Natural killer cell (primary cell): ENCODE measurements at regions of chr11 and their contacts with region 1.

Region 1: DNA sequence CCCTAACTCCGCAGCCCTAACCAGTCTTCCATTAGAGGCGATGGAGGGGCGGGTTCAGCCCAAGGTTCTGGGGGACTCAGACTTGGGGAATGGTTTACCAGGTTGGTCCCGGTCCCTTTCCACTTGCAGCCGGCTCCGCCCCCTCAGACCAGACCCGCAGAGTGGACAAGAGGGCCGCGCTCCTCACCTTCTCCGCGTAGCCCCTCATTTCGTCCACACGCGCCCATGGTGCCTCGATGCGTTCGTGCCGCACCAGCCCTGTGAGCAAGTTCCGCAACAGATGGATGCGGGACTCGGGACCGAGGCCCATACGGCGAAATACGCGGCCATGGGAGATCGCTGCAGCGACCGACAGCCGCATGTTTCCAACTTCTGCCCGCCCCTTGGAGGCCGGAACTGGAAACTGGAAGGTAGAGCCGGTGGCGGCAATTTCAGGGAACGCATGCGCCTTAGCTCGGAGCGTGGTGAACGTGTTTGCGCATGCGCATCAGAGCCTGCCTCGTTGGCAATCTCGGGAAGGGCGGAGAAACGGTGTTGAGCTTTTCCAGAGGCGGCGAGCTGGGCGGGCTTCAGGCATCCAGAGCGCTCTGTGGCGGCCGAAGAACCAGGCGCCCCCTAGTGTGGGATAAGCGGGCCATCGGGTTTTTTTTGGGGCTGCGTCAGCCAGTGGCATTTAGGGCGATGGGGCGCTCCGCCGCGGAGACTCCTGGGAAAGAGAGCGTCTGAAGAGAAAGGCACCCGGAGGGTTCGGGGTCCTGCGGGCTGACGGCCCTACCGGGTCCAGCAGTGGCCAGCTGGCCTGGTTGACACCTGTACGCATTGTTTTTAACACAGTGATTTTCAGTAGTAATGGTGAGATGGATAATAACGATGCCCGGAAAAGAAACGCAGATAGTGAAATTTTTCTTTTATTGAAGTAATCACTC is at the start of gene MRPL17:
- DNase-seq: peak; percentile 94 to 100
- ATAC-seq: peak; percentile 86 to 95 (median 94)
- H3K4me3 ChIP-seq: peak within 1 kb of the TSS; percentile 92
- H3K4me3 Mint-ChIP-seq: peak within 1 kb of the TSS; percentile 99
- H3K27ac ChIP-seq: peak within 1 kb of the TSS; percentile 89
- H3K27ac Mint-ChIP-seq: peak within 1 kb of the TSS; percentile 99 to 100
- H3K4me1 ChIP-seq: peaks cover 12% of the 10 kb centered on the region
- H3K4me1 Mint-ChIP-seq: peaks cover 24 to 31% of the 10 kb centered on the region in 2 donors
- H3K27me3 ChIP-seq: no peaks in the 10 kb centered on the region
- H3K27me3 Mint-ChIP-seq: no peaks in the 10 kb centered on the region
- CTCF ChIP-seq: peak; percentile 55
- total RNA-seq, gene MRPL17: 9.0 to 11.8 (median 11.4) TPM

Region 2: GRCh38 chr11:6481012-6481923 is 201.9 kb before region 1 on chr11 and contains the starts of genes ARFIP2 and TIMM10B:
- intact Hi-C with region 1: loop called (anchors 2 kb)
- DNase-seq: peak; percentile 95 to 99
- ATAC-seq: peak; percentile 92 to 98 (median 96)
- H3K4me3 ChIP-seq: peak within 1 kb of the TSS; percentile 74
- H3K4me3 Mint-ChIP-seq: peak within 1 kb of the TSS; percentile 91
- H3K27ac ChIP-seq: peak within 1 kb of the TSS; percentile 95
- H3K27ac Mint-ChIP-seq: peak within 1 kb of the TSS; percentile 95 to 99
- H3K4me1 ChIP-seq: peaks cover 22% of the 10 kb centered on the region
- H3K4me1 Mint-ChIP-seq: peaks cover 32 to 37% of the 10 kb centered on the region in 2 donors
- H3K27me3 ChIP-seq: no peaks in the 10 kb centered on the region
- H3K27me3 Mint-ChIP-seq: no peaks in the 10 kb centered on the region
- CTCF ChIP-seq: no peak
- total RNA-seq, gene ARFIP2: 44.7 to 62.3 (median 51.4) TPM
- total RNA-seq, gene TIMM10B: 69.6 to 92.8 (median 71.4) TPM

Region 3: GRCh38 chr11:6612213-6613041 is 70.8 kb before region 1 on chr11 and contains the start of gene TAF10:
- intact Hi-C with region 1: loop called (anchors 1 kb)
- DNase-seq: peak; percentile 93 to 98
- ATAC-seq: peak; percentile 80 to 93 (median 84)
- H3K4me3 ChIP-seq: peak within 1 kb of the TSS; percentile 65
- H3K4me3 Mint-ChIP-seq: peak within 1 kb of the TSS; percentile 84
- H3K27ac ChIP-seq: peak within 1 kb of the TSS; percentile 95
- H3K27ac Mint-ChIP-seq: no peak within 1 kb of the TSS
- H3K4me1 ChIP-seq: peaks cover 49% of the 10 kb centered on the region
- H3K4me1 Mint-ChIP-seq: peaks cover 27 to 38% of the 10 kb centered on the region in 2 donors
- H3K27me3 ChIP-seq: no peaks in the 10 kb centered on the region
- H3K27me3 Mint-ChIP-seq: no peaks in the 10 kb centered on the region
- CTCF ChIP-seq: peak; percentile 45
- total RNA-seq, gene TAF10: 154 to 191 (median 158) TPM

Region 4: GRCh38 chr11:6619004-6619745 is 64.0 kb before region 1 on chr11 and contains the start of gene TPP1:
- intact Hi-C with region 1: loop called (anchors 1 kb)
- DNase-seq: peak; percentile 89 to 95
- ATAC-seq: peak; percentile 89 to 97 (median 96)
- H3K4me3 ChIP-seq: peak within 1 kb of the TSS; percentile 72
- H3K4me3 Mint-ChIP-seq: no peak within 1 kb of the TSS
- H3K27ac ChIP-seq: peak within 1 kb of the TSS; percentile 89
- H3K27ac Mint-ChIP-seq: no peak within 1 kb of the TSS
- H3K4me1 ChIP-seq: peaks cover 26% of the 10 kb centered on the region
- H3K4me1 Mint-ChIP-seq: peaks cover 0 to 8% of the 10 kb centered on the region in 2 donors
- H3K27me3 ChIP-seq: no peaks in the 10 kb centered on the region
- H3K27me3 Mint-ChIP-seq: no peaks in the 10 kb centered on the region
- CTCF ChIP-seq: no peak
- total RNA-seq, gene TPP1: 123 to 135 (median 131) TPM